ENCODE measurements at regions of chr5 and their contacts with region 1.

Region 1: GRCh38 chr5:154857530-154858296 is 714 bp upstream of the CNOT8 start:
- DNase-seq: peak; percentile 91 to 98
- H3K4me3 ChIP-seq: peak overlapping the region; percentile 74 to 90
- H3K27ac ChIP-seq: peak overlapping the region; percentile 94 to 98
- H3K4me1 ChIP-seq: peaks cover 0 to 22% of the 10 kb centered on the region in 2 donors
- H3K27me3 ChIP-seq: no peaks in the 10 kb centered on the region
- CTCF ChIP-seq: peak in 1 of 3 experiments; percentile 3

Region 2: GRCh38 chr5:154445422-154446182 is 412.1 kb before region 1 on chr5 and contains the start of gene SAP30L:
- intact Hi-C with region 1: loop called (anchors 10 kb)
- DNase-seq: peak; percentile 96 to 99
- H3K4me3 ChIP-seq: peak within 1 kb of the TSS; percentile 97 to 99
- H3K27ac ChIP-seq: peak within 1 kb of the TSS; percentile 86 to 92
- H3K4me1 ChIP-seq: peaks cover 4 to 24% of the 10 kb centered on the region in 2 donors
- H3K27me3 ChIP-seq: no peaks in the 10 kb centered on the region
- CTCF ChIP-seq: no peak
- total RNA-seq, gene SAP30L: 36.5 TPM

Region 3: DNA sequence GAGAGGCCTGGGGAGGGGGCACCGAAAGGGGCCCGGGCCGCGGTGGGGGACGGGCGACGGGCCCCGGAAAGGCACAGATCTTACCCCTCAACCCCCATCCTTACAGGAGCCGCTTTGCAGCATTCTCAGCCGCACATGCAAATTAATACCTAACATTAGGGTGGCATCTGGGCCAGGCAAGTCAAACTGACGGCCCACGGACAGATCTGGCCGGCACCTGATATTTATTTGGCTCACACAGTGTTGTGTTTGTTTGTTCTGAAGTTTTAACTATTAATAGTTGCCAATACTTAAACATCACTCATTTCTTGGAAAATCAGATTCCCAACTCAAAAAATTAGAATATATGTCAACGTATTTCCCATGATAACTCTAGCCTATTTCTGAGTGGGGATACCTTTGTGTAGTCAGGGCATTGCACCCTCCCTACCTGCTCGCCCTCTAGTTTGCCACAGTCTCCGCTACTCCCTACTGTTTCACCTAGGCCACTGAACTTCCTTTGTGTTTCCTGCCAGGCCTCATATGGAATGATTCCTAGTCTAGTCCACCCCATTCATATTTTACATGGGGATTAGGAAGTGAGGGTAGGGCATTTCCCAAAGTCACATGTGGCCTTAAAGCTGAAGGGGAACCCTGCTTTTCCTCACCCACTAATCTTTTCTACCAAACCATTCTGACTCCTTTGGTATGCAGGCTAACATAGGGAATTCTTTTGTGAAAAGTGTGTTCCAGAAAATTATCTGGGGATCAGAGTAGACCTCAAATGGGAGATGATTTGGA is 174.4 kb before region 1 on chr5:
- intact Hi-C with region 1: loop called (anchors 2 kb)
- DNase-seq: no peak
- H3K4me3 ChIP-seq: peak overlapping the region; percentile 55 to 80
- H3K27ac ChIP-seq: peak overlapping the region; percentile 65 to 77
- H3K4me1 ChIP-seq: peaks cover 5 to 10% of the 10 kb centered on the region in 2 donors
- H3K27me3 ChIP-seq: no peaks in the 10 kb centered on the region
- CTCF ChIP-seq: no peak

Region 4: DNA sequence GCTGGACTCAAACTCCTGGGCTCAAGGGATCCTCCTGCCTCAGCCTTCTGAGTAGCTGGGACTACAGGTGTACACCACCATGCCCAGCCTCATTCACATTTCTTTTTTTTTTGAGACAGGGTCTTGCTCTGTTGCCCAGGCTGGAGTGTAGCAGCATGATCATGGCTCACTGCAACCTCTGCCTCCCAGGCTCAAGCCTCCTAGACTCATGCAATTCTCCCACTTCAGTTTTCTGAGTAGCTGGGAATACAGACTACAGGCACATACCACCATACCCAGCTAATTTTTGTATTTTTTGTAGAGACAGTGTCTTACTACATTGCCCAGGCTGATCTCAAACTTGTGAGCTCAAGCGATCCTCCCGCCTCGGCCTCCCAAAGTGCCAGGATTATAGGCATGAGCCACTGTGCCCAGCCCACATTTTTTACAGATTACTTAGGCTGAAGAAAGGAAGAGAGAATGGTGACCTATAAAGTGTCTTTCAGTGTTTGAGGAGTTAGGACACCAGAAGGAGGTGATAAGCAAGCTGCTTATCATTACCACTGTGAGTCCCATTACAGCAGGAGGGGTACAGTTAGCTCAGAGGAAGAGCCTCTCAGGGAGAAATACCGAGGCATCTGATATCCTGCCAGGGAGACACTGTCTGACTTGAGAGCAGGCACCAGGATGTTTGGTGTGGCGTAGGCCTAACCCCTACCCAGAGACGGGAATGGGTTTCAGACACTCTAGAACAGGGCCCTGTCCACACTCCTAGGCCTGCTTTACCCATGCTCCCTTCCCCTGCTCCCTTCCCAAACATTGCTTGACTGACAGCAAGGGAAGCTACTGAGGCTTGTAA is 17.1 kb before region 1 on chr5:
- intact Hi-C with region 1: loop called (anchors 1 kb)
- DNase-seq: no peak
- H3K4me3 ChIP-seq: no peak overlapping the region
- H3K27ac ChIP-seq: peak overlapping the region in 1 of 2 donors; percentile 25
- H3K4me1 ChIP-seq: peaks cover 0 to 7% of the 10 kb centered on the region in 2 donors
- H3K27me3 ChIP-seq: no peaks in the 10 kb centered on the region
- CTCF ChIP-seq: no peak

Region 5: DNA sequence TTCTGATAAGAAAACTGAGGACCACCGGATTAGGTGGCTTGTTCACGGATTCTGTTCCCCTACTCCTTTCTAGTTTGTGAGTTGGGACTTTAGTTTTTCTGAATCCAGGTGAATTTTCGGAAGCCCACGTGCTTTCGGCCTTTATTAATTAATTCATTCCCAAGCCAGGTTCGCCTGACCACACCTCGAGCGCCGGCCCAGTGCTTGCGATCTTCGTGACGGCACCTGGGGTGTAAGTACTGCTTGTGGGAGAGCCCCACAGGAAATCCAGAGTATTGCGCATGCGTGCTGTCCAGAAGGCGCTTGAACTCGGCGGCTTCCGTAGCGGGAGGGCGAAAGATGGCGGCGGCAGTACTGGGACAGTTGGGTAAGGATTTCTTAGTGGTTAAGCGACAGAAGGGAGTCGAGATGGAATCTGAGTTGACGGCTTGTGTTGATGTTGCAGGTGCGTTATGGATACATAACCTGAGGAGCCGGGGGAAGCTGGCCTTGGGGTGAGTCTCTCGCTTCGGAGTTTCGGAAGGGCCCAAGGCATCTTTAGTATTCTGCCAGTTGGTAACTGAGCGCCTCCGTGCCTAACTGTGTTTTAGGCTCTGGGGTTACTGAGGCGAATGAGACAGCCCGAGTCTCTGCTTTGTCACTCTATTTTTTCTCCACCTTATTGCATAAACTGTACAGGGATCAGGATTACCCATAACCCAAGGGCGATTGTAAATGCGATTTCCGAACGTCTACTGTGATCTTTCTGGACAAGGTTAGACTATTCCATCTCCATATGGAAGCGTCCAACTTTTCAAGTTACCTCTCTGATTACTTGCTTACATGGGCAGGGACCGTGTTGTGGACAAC is 83.3 kb after region 1 on chr5 and contains the start of gene MRPL22:
- intact Hi-C with region 1: loop called (anchors 1 kb)
- DNase-seq: peak; percentile 59 to 94
- H3K4me3 ChIP-seq: peak within 1 kb of the TSS; percentile 61 to 89
- H3K27ac ChIP-seq: peak within 1 kb of the TSS; percentile 66 to 69
- H3K4me1 ChIP-seq: peaks cover 4 to 25% of the 10 kb centered on the region in 2 donors
- H3K27me3 ChIP-seq: no peaks in the 10 kb centered on the region
- CTCF ChIP-seq: peak in 1 of 3 experiments; percentile 4
- total RNA-seq, gene MRPL22: 7.8 TPM